ENCODE measurements at regions of chr3 and their contacts with region 1.

Region 1: GRCh38 chr3:54427941-54428871 is 305.9 kb downstream of the CACNA2D3 start:
- DNase-seq: peak; percentile 4
- H3K4me3 Mint-ChIP-seq: no peak overlapping the region
- H3K27ac Mint-ChIP-seq: no peak overlapping the region
- H3K4me1 Mint-ChIP-seq: no peaks in the 10 kb centered on the region
- H3K27me3 Mint-ChIP-seq: no peaks in the 10 kb centered on the region

Region 2: GRCh38 chr3:53938645-53939044 is 489.6 kb before region 1 on chr3:
- intact Hi-C with region 1: loop called (anchors 5 kb)
- DNase-seq: peak; percentile 12
- H3K4me3 Mint-ChIP-seq: no peak overlapping the region
- H3K27ac Mint-ChIP-seq: no peak overlapping the region
- H3K4me1 Mint-ChIP-seq: no peaks in the 10 kb centered on the region
- H3K27me3 Mint-ChIP-seq: no peaks in the 10 kb centered on the region

Region 3: DNA sequence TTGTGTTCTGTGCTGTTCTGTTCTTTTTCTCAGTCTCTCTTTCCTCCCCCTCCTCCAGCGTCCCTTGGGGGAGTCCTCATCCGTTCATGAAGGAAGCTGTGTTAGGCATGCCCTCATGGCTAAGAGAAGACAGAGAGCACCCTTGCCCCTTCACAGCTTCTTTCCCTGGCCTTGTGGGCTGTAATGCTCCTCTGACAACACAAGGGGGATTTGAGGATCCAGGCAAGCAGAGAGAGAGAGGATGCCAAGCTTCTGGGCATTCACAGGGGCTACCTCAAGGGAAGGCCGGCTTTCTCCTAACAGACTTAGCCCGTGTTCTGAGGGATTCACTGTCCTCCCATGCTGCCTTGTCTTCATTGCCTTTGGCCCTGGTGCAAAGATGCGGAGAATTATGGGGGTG is 110.1 kb after region 1 on chr3:
- intact Hi-C with region 1: no loop called
- DNase-seq: no peak
- H3K4me3 Mint-ChIP-seq: no peak overlapping the region
- H3K27ac Mint-ChIP-seq: no peak overlapping the region
- H3K4me1 Mint-ChIP-seq: no peaks in the 10 kb centered on the region
- H3K27me3 Mint-ChIP-seq: no peaks in the 10 kb centered on the region

Region 4: DNA sequence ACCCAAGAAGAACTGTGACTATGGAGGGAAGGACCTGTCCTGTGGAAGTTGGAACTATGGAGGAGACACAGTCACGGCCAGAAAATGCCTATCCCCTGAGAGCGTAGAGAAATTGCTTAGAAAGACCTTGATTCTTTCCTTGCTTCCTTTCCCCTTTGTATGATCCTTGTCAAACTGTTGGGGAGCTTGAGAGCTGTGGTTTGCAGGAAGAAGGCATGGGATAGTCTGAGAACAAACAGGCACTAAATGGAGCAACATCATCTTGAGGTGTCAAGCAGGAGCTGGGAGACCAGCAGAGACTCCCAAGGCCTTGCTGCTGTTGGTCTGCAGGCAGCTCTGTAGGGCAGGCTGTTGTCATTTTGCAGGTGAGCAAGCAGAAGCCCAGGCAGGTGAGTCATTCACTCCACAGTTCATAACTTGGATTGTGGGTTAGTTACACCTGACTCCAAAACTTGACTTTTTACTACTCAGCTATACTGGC is 200.7 kb after region 1 on chr3:
- intact Hi-C with region 1: no loop called
- DNase-seq: no peak
- H3K4me3 Mint-ChIP-seq: no peak overlapping the region
- H3K27ac Mint-ChIP-seq: no peak overlapping the region
- H3K4me1 Mint-ChIP-seq: no peaks in the 10 kb centered on the region
- H3K27me3 Mint-ChIP-seq: no peaks in the 10 kb centered on the region